ENCODE measurements at regions of chr2 and their contacts with region 1.

Region 1: DNA sequence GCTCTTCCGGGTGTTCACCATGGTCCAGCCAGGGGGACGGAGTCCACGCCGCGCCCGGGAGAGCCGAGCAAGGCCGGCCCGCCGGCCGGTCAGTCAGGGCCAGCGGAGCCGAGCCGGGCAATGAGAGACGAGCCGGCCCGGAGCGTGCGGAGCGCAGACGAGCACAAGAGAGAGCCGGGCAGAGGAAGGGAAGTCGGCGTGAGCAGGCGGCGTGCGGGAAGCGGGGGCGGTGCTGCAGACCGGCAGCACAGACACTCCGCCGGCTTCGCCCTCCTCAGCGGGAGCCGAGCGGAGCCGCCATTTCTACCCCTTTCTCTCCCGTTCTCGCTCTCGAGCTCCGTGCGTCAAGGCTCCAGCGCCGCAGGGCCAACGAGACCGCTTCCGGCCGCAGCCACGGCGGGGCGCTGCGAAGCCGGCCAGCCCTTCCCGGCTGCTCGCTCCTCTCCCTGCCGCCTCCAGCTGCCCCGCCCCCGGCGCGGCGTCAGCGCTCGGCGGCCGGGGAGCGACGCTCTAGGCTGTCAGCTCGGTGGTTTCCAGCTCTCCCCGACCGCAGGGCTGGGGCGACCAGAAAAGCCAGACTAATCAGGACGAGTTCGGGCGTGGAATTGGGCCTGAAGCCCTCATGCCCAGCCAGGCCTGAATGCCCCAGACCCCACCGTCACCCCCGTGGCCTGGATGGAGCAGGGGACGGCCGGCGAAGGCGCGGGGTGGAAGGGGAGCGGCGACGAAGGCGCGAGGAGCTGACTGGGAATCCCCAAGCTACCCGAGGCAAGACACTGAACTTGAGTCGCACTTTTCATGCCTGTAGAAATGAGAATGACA is at the start of gene ATAD2B:
- DNase-seq: peak; percentile 94
- ATAC-seq: peak; percentile 91
- H3K4me3 ChIP-seq: peak within 1 kb of the TSS; percentile 88
- H3K27ac ChIP-seq: peak within 1 kb of the TSS; percentile 99
- H3K4me1 ChIP-seq: no peaks in the 10 kb centered on the region; the same call in 1 of the 2 replicates
- H3K27me3 ChIP-seq: no peaks in the 10 kb centered on the region
- CTCF ChIP-seq: peak; percentile 93
- POLR2A ChIP-seq: peak; percentile 86
- RAD21 ChIP-seq: peak; percentile 86
- total RNA-seq, gene ATAD2B: 5.0 and 9.4 TPM in 2 replicates

Region 2: GRCh38 chr2:23824777-23825212 is 102.2 kb before region 1 on chr2:
- CTCF ChIA-PET with region 1: interaction called, 7 read pairs
- POLR2A ChIA-PET with region 1: no interaction called
- dilution Hi-C with region 1: no loop called
- in situ Hi-C with region 1: no loop called
- intact Hi-C with region 1: loop called (anchors 2 kb)
- DNase-seq: peak; percentile 62
- ATAC-seq: peak; percentile 76
- H3K4me3 ChIP-seq: no peak overlapping the region
- H3K27ac ChIP-seq: no peak overlapping the region
- H3K4me1 ChIP-seq: no peaks in the 10 kb centered on the region
- H3K27me3 ChIP-seq: no peaks in the 10 kb centered on the region
- CTCF ChIP-seq: peak; percentile 72
- POLR2A ChIP-seq: no peak
- RAD21 ChIP-seq: peak; percentile 69

Region 3: DNA sequence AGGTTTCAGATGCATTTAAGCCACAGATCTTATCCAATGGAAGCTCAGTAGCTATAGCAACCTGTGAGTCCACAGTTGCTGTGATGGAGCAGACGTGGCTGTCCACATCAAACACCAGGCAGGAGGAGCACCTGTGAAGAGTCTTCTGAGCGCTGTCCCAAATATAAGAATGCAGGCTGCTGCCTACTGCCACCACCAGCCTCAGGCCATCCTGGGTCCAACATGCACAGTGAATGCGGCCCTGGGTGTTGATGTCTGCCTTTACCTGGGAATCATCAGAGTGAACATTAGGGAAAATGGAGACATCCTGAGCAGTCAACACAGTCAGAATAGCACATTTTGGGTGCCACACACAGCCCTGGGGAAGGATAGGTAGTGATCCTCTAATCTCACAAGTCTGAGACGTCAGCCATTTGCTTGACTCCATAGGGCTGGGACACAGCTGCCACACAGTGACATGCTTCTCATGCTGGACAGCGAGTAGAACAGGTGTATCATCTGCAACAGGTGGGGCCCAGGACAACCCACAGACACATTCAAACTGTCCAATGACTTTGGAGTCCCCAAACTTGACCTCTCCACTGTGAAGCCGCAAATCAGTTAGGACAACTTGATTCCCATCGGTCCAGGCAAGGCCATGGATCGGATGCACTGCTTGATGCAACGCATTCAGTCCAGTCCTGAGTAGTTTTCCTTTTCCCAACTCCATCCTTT is 112.0 kb after region 1 on chr2:
- CTCF ChIA-PET with region 1: no interaction called
- POLR2A ChIA-PET with region 1: no interaction called
- dilution Hi-C with region 1: no loop called
- in situ Hi-C with region 1: no loop called
- intact Hi-C with region 1: no loop called
- DNase-seq: no peak
- ATAC-seq: no peak
- H3K4me3 ChIP-seq: no peak overlapping the region
- H3K27ac ChIP-seq: no peak overlapping the region
- H3K4me1 ChIP-seq: no peaks in the 10 kb centered on the region
- H3K27me3 ChIP-seq: no peaks in the 10 kb centered on the region
- CTCF ChIP-seq: no peak
- POLR2A ChIP-seq: no peak
- RAD21 ChIP-seq: no peak

Region 4: DNA sequence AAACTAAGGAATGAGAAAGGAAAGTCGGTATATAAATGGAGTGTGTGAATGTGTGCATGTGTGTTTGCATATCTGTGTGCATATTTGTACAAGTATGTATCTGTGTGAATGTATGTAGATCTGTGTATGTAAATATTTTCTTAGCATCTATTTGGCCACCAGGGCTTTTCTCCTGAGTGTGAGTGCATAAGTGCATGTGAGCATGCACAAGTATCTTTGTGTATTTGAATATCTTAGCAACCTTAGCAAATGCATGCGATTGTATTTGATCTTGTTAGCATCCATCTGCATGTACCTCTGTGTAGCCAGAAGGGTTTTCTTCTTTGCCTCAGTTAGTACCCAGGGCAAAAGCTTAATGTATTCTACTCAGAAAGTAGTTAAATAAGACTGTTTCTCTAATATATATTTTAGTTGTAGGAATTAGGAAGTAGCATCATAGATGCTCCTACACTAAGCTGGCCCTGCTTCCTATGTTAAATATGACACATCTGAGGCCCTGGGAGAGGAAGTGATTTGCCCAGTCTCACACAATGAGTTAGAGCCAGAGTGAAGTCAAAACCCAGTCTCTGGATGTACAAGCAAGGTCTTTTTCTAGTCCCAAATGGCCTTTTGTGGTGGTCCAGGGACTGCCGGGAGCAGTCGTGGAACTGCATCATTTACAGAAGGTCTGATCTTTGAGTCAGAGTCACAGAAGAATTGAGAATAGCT is 131.8 kb after region 1 on chr2:
- CTCF ChIA-PET with region 1: interaction called, 4 read pairs
- POLR2A ChIA-PET with region 1: no interaction called
- dilution Hi-C with region 1: no loop called
- in situ Hi-C with region 1: no loop called
- intact Hi-C with region 1: loop called (anchors 1 kb)
- DNase-seq: no peak
- ATAC-seq: no peak
- H3K4me3 ChIP-seq: no peak overlapping the region
- H3K27ac ChIP-seq: no peak overlapping the region
- H3K4me1 ChIP-seq: no peaks in the 10 kb centered on the region
- H3K27me3 ChIP-seq: no peaks in the 10 kb centered on the region
- CTCF ChIP-seq: no peak
- POLR2A ChIP-seq: no peak
- RAD21 ChIP-seq: no peak

Region 5: GRCh38 chr2:24084386-24085361 is 157.7 kb after region 1 on chr2 and contains the start of gene TP53I3:
- CTCF ChIA-PET with region 1: interaction called, 6 read pairs
- POLR2A ChIA-PET with region 1: no interaction called
- dilution Hi-C with region 1: no loop called
- in situ Hi-C with region 1: no loop called
- intact Hi-C with region 1: loop called (anchors 1 kb)
- DNase-seq: peak; percentile 84
- ATAC-seq: peak; percentile 93
- H3K4me3 ChIP-seq: peak within 1 kb of the TSS; percentile 70
- H3K27ac ChIP-seq: peak within 1 kb of the TSS; percentile 89
- H3K4me1 ChIP-seq: peaks cover 4% of the 10 kb centered on the region; the same call in 1 of the 2 replicates
- H3K27me3 ChIP-seq: no peaks in the 10 kb centered on the region
- CTCF ChIP-seq: peak; percentile 91
- POLR2A ChIP-seq: peak; percentile 71
- RAD21 ChIP-seq: peak; percentile 79
- total RNA-seq, gene TP53I3: 25.5 and 26.9 TPM in 2 replicates

Region 6: DNA sequence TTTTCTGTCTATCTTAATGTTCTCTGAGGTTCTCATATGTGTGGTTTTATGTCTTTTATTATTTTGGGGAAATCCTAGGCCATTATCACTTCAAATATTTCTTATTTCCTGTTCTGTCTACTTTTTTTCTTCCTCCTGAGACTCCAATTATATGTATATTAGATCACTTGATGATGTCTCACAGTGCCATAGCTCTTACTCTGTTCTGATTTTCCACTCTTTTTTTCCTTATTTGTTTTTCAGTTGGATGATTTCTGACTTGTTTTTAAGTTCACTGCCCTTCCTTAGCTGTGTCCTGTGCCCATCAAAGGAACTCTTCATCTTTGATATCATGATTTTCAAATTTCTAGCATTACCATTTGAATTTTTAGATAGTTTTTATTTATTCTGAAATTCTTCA is 220.4 kb after region 1 on chr2:
- CTCF ChIA-PET with region 1: no interaction called
- POLR2A ChIA-PET with region 1: no interaction called
- dilution Hi-C with region 1: no loop called
- in situ Hi-C with region 1: no loop called
- intact Hi-C with region 1: no loop called
- DNase-seq: no peak
- ATAC-seq: no peak
- H3K4me3 ChIP-seq: no peak overlapping the region
- H3K27ac ChIP-seq: no peak overlapping the region
- H3K4me1 ChIP-seq: no peaks in the 10 kb centered on the region
- H3K27me3 ChIP-seq: no peaks in the 10 kb centered on the region
- CTCF ChIP-seq: no peak
- POLR2A ChIP-seq: no peak
- RAD21 ChIP-seq: no peak